Activated naive CD4-positive, alpha-beta T cell treated with anti-CD3 and anti-CD28 coated beads for 36 hours (primary cell): ENCODE measurements at regions of chr1 and their contacts with region 1.

Region 1: GRCh38 chr1:113072757-113073478 is at the start of gene LRIG2:
- DNase-seq: peak; percentile 99
- H3K4me3 Mint-ChIP-seq: peak within 1 kb of the TSS; percentile 94
- H3K27ac Mint-ChIP-seq: peak within 1 kb of the TSS; percentile 91
- H3K4me1 Mint-ChIP-seq: peaks cover 27% of the 10 kb centered on the region
- H3K27me3 Mint-ChIP-seq: no peaks in the 10 kb centered on the region
- total RNA-seq, gene LRIG2: 7.7 to 9.1 TPM

Region 2: GRCh38 chr1:112619520-112620376 is 453.2 kb before region 1 on chr1 and contains the start of gene CAPZA1:
- CTCF ChIA-PET with region 1: interaction called, 3 read pairs
- intact Hi-C with region 1: loop called (anchors 2 kb)
- DNase-seq: peak; percentile 95
- H3K4me3 Mint-ChIP-seq: peak within 1 kb of the TSS; percentile 99
- H3K27ac Mint-ChIP-seq: peak within 1 kb of the TSS; percentile 100
- H3K4me1 Mint-ChIP-seq: peaks cover 48% of the 10 kb centered on the region
- H3K27me3 Mint-ChIP-seq: no peaks in the 10 kb centered on the region
- total RNA-seq, gene CAPZA1: 231 to 242 TPM

Region 3: DNA sequence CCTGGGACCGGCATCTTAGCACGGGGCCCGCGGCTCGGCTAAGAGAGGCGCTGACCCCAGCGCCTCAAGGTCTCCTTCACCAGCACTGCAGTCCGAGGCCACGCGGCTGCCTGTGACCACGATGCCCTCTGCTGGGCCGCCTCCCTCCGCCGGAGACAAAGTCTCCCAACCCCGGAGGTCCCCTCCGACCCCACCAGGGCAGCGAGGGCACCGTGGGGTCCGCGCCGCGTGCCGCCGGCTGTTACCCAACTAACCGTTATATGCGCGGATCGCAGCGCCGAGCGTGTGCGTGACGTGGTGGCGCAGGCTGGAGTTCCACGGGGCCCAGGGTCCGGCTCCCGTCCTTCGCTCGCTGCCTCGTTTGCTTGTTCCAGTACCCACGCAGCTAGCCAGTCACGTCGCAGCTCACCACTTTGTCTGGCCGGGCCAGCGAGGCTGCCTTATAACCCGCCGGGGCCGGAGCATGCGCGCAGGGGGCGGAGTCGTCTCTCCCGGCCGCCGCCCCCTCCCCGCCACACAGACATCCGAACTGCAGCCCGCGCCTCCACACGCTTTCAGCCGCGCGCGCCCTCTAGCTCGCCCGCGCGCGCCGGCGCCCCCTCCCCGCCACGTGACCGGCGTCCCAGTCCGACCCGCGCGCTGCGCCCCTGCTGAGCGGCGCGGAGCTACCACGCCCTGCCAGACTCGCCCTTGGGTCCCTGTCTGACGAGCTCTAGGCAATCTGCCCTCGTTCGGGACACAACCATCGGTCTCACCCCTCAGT is 117.0 kb before region 1 on chr1 and contains the start of gene SLC16A1:
- CTCF ChIA-PET with region 1: interaction called, 10 read pairs
- intact Hi-C with region 1: loop called (anchors 2 kb)
- DNase-seq: peak; percentile 87
- H3K4me3 Mint-ChIP-seq: peak within 1 kb of the TSS; percentile 95
- H3K27ac Mint-ChIP-seq: peak within 1 kb of the TSS; percentile 97
- H3K4me1 Mint-ChIP-seq: peaks cover 61% of the 10 kb centered on the region
- H3K27me3 Mint-ChIP-seq: no peaks in the 10 kb centered on the region
- total RNA-seq, gene SLC16A1: 56.3 to 57.5 TPM

Region 4: DNA sequence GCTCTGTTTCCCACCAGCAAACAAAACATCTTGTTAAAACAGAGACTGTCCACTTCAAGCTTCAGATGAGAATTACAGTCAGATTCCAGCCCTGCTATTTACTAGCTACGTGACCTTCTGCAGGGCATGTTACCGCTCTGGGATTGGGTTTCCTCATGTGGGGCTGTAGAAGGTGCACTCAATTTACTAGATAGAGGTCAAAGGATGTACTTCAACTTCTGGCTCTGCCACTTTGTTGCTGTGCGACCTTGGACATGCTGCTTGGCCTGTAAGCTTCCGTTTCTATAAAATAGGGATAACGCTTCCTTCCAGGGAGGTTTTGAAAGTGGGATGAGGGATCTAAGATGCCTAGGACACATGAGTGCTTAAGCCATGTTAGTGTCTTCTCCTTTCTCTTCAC is 45.9 kb before region 1 on chr1:
- CTCF ChIA-PET with region 1: no interaction called
- intact Hi-C with region 1: no loop called
- DNase-seq: no peak
- H3K4me3 Mint-ChIP-seq: no peak overlapping the region
- H3K27ac Mint-ChIP-seq: no peak overlapping the region
- H3K4me1 Mint-ChIP-seq: peaks cover 4% of the 10 kb centered on the region
- H3K27me3 Mint-ChIP-seq: no peaks in the 10 kb centered on the region

Region 5: DNA sequence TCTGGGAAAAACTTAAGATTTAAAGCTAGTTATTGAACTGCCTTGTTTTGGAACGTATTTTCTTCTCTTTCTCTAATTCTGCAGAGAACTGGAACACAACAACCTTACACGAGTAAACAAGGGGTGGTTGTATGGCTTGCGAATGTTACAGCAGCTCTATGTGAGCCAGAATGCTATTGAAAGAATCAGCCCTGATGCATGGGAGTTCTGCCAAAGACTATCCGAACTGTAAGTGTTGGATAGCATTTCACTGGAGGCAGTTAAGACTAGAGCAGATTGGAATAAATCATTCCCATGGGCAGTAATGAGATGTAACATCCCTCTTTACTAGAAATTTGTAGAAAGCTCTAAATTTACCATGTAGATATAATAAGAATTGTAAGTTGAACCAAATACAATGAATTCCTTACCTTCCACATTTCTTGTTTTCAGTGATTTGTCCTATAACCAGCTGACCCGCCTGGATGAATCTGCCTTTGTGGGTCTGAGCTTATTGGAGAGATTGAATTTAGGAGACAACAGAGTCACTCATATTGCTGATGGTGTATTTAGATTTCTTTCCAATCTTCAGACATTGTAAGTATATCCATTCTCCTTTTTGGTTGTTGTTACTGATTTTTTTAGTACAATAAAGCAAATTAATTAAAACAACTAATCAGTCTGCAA is 23.0 kb after region 1 on chr1:
- CTCF ChIA-PET with region 1: interaction called, 10 read pairs
- intact Hi-C with region 1: no loop called
- DNase-seq: no peak
- H3K4me3 Mint-ChIP-seq: no peak overlapping the region
- H3K27ac Mint-ChIP-seq: no peak overlapping the region
- H3K4me1 Mint-ChIP-seq: peaks cover 6% of the 10 kb centered on the region
- H3K27me3 Mint-ChIP-seq: no peaks in the 10 kb centered on the region

Region 6: GRCh38 chr1:113291777-113292602 is 219.1 kb after region 1 on chr1:
- CTCF ChIA-PET with region 1: no interaction called
- intact Hi-C with region 1: no loop called
- DNase-seq: no peak
- H3K4me3 Mint-ChIP-seq: no peak overlapping the region
- H3K27ac Mint-ChIP-seq: no peak overlapping the region
- H3K4me1 Mint-ChIP-seq: no peaks in the 10 kb centered on the region
- H3K27me3 Mint-ChIP-seq: peaks cover 18% of the 10 kb centered on the region

Region 7: DNA sequence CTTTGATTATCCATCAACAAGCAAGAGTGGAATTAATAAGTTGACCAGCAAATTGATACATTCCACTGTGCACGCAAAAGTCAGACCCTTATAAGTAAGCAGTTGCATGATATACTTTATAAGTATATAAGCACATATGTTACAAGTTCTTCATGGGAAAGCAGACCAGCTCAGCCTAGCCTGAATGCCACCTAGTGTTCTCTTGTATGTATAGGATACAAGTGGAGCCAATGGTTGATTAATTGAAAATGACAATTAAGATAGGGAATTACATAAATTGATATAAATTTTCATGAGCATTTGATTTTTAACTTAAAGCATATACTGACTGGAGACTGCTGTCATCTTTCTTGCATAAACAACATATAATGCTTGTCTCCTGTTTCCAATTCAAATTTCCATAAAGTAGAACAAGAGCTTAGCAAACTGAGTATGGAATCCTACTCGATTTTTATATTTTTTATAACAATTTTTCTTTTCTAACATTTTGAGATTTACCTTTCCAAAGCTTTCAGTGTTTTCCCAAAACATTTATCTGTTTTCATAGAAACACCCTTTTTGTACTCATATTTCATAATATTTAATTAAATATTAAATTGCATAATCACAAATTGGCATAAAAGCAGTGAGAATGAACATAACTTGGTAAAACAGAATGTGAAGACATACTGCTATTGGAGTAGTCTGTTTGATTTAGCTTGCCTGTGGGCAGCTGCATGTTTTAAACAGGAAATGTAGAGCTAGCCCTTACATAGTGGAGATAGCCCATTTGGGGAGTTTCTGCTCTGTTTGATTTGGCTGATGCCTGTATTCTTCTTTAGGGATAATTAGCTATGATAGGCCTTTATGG is 380.2 kb after region 1 on chr1:
- CTCF ChIA-PET with region 1: no interaction called
- intact Hi-C with region 1: loop called (anchors 5 kb)
- DNase-seq: peak; percentile 18
- H3K4me3 Mint-ChIP-seq: no peak overlapping the region
- H3K27ac Mint-ChIP-seq: no peak overlapping the region
- H3K4me1 Mint-ChIP-seq: no peaks in the 10 kb centered on the region
- H3K27me3 Mint-ChIP-seq: no peaks in the 10 kb centered on the region

Region 8: DNA sequence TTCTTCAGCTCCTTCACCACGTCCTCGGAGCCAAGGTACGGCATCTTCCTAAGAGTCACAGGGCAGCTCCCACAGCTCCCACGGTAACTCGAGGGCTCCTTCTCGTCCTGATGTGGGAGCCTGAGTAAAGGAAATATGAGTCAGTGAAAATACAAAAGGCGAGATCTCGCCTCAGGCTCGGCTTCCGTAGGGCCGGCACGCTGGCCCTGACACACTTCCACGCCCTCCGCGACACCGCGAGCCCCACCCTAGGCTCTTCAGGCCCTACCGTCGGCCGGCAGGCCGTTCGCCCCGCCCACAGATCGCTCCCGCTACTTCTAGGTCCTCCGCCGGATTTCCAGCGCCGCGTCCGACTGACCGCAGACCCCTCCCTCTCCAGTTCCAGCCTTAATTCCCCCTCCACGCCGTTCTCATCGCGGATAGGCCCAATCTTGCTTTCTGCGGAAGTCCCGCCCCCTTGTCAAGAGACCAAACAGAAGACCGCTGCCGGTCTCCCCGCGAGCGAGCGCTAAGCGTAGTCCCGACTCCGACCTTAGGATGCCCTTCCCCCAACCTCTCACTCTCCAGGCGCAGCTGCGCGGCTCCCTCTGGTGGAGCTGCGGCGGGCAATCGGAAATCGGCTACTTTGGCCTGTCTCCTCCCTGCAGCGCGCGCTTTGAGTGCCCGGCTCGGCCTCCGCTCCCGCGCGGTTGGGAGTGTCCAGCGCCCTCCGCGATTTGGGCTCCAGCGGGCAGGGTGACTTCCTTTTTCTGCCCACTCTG is 831.9 kb after region 1 on chr1 and contains the starts of genes AP4B1 and DCLRE1B:
- CTCF ChIA-PET with region 1: no interaction called
- intact Hi-C with region 1: loop called (anchors 2 kb)
- DNase-seq: peak; percentile 99
- H3K4me3 Mint-ChIP-seq: peak within 1 kb of the TSS; percentile 99
- H3K27ac Mint-ChIP-seq: peak within 1 kb of the TSS; percentile 97
- H3K4me1 Mint-ChIP-seq: peaks cover 51% of the 10 kb centered on the region
- H3K27me3 Mint-ChIP-seq: no peaks in the 10 kb centered on the region
- total RNA-seq, gene AP4B1: 35.7 to 40.2 TPM
- total RNA-seq, gene DCLRE1B: 17.7 to 18.3 TPM